ENCODE measurements at regions of chr15 and their contacts with region 1.

Region 1: GRCh38 chr15:33737687-33738601 is 230.4 kb upstream of the CHRM5 start:
- DNase-seq: peak; percentile 52
- H3K4me3 ChIP-seq: no peak overlapping the region
- H3K27ac ChIP-seq: no peak overlapping the region
- H3K4me1 ChIP-seq: no peaks in the 10 kb centered on the region
- H3K27me3 ChIP-seq: no peaks in the 10 kb centered on the region
- CTCF ChIP-seq: peak; percentile 68

Region 2: GRCh38 chr15:33963831-33964664 is 226.1 kb after region 1 on chr15:
- intact Hi-C with region 1: loop called (anchors 5 kb)
- DNase-seq: no peak
- H3K4me3 ChIP-seq: no peak overlapping the region
- H3K27ac ChIP-seq: no peak overlapping the region
- H3K4me1 ChIP-seq: no peaks in the 10 kb centered on the region
- H3K27me3 ChIP-seq: no peaks in the 10 kb centered on the region
- CTCF ChIP-seq: peak; percentile 38

Measured in colonic mucosa (tissue), 4 donors.